Left ventricle myocardium superior (tissue), 1 donor: ENCODE measurements at regions of chr1 and their contacts with region 1.

Region 1: GRCh38 chr1:179081687-179082332 is at the start of gene TOR3A:
- DNase-seq: peak; percentile 95
- ATAC-seq: peak; percentile 98
- total RNA-seq, gene TOR3A: 8.7 TPM

Region 2: DNA sequence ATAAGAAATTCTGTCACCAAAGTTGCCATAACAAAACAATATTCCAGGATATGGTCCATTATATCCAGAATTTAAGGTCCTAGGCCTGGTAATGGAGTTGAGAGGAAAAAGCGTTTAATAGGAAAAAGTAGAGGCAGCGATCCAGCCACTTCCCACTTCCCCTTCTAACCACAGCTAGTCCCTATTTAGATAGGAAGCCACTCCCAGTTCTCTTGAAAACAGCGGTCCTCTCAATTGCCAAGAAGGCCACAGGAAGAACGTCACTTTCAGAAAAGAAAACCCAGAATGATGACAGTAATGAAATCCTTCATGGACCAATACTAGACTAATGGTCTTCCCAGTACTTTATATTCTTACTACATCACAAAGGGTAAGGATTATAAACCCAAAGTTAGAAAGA is 109.1 kb after region 1 on chr1:
- intact Hi-C with region 1: loop called (anchors 10 kb)
- DNase-seq: no peak
- ATAC-seq: peak; percentile 76

Region 3: GRCh38 chr1:179365320-179366092 is 283.7 kb after region 1 on chr1 and contains the start of gene AXDND1:
- intact Hi-C with region 1: loop called (anchors 2 kb)
- DNase-seq: peak; percentile 90
- ATAC-seq: peak; percentile 97
- total RNA-seq, gene AXDND1: not detected